Mammary epithelial cell (primary cell): ENCODE measurements at regions of chr6 and their contacts with region 1.

Region 1: DNA sequence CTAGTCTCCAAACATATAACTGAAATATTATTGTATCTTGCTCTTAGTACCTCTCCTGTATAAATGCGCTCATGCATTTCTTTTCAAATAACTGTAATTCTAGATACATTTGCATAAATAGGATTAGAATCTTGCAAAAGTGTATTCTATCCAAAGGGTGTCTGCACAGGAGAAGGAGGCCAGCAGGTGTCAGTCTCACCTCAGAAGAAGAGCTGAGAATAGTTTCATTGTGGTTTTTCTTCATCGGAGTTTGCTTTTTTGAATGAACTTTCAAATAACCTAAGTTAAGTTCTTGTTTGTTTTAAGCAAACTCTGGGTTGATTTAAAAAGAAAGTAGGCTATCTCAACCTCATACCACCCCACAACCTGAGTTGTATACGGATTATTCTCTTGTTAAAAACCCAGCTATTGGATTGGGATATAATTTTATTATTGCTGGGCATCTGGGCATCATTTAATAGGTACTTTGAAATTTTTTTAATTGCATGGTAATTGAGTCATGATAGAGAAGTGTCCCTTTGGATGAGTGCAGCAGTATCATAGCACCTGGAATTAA is 125.0 kb upstream of the MLIP start:
- DNase-seq: peak; percentile 39
- H3K4me3 ChIP-seq: no peak overlapping the region
- H3K27ac ChIP-seq: no peak overlapping the region
- H3K4me1 ChIP-seq: peaks cover 38% of the 10 kb centered on the region
- H3K27me3 ChIP-seq: no peaks in the 10 kb centered on the region
- CTCF ChIP-seq: peak; percentile 84 to 90

Region 2: DNA sequence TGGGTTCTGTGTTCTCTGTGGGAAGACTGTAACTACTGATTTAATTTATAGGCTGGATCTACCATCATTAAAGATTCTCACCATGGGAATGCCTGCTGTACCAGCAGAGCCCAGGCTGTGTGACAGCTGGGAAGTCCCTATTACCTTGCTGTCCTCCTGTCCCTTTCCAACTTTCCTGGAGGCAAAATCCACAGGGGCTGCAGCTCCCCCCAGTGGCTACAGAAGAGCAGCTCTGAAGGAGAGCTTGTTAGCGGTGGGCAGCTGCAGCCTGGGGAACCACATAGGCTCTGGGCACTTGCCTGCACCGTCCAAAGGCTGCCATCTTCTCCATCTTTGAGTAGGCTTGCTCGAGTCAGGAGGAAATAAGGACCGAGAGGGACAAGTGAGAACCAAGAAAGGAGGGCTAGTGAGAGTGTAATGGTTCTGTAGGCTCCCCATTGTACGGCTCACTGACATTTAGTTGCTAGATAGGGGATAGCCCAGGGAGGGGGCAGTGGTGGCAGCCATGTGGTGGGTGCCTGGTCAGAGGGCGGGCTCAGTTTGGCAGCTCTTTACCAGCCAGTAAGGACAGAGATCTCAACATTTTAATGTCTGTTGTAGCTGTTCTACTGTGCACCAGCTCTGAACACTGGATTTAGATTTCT is 30.1 kb before region 1 on chr6:
- CTCF ChIA-PET with region 1: no interaction called
- dilution Hi-C with region 1: no loop called
- in situ Hi-C with region 1: no loop called
- intact Hi-C with region 1: no loop called
- DNase-seq: peak; percentile 54
- H3K4me3 ChIP-seq: no peak overlapping the region
- H3K27ac ChIP-seq: no peak overlapping the region
- H3K4me1 ChIP-seq: no peaks in the 10 kb centered on the region
- H3K27me3 ChIP-seq: no peaks in the 10 kb centered on the region
- CTCF ChIP-seq: peak; percentile 54 to 82

Region 3: GRCh38 chr6:54173089-54173488 is 186.8 kb after region 1 on chr6:
- CTCF ChIA-PET with region 1: interaction called, 13 read pairs
- dilution Hi-C with region 1: no loop called
- in situ Hi-C with region 1: no loop called
- intact Hi-C with region 1: no loop called
- DNase-seq: no peak
- H3K4me3 ChIP-seq: no peak overlapping the region
- H3K27ac ChIP-seq: no peak overlapping the region
- H3K4me1 ChIP-seq: peaks cover 3% of the 10 kb centered on the region
- H3K27me3 ChIP-seq: peaks cover 2% of the 10 kb centered on the region
- CTCF ChIP-seq: no peak

Region 4: DNA sequence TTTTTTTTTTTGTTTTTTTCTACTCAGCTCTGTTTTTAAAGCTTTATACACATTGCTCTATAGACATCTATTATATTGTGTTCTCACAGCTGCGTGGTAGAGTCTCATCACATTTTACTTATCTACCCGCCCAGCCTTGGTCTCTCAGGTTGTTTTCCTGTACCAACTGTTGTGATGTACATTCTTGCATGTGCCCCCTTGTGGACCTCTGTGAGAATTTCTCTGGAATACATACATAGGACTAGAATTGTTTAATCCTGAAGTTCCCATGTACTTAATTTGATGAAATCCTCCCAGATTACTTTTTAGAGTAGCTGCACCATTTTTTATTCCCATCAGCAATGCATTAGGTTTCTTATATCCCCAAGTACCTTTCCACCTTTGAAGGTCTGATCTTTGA is 281.6 kb after region 1 on chr6:
- CTCF ChIA-PET with region 1: no interaction called
- dilution Hi-C with region 1: no loop called
- in situ Hi-C with region 1: loop called in 1 of 2 experiments (anchors 25 kb)
- intact Hi-C with region 1: loop called (anchors 2 kb)
- DNase-seq: peak; percentile 19
- H3K4me3 ChIP-seq: no peak overlapping the region
- H3K27ac ChIP-seq: no peak overlapping the region
- H3K4me1 ChIP-seq: no peaks in the 10 kb centered on the region
- H3K27me3 ChIP-seq: no peaks in the 10 kb centered on the region
- CTCF ChIP-seq: peak; percentile 58 to 63

Region 5: DNA sequence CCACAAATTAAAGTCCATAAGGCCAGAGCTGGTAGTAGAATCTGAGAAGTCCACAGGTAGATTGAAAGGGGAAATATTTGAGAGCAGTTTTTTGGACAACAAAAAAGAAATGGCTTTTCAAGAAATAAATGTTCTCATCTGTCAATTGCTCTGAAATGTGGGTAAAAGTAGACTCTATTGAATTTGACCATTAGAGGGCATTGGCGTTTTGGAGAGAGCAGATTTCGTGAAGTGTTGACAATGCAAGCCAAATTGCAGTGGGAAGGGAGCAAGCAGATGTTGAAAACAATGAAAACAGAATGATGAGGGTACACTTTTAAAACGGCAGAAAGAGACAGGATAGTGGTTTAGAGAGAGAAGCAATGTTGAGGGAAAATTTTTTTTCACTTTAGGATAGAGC is 711.2 kb after region 1 on chr6:
- CTCF ChIA-PET with region 1: no interaction called
- dilution Hi-C with region 1: no loop called
- in situ Hi-C with region 1: loop called in 1 of 2 experiments (anchors 25 kb)
- intact Hi-C with region 1: loop called (anchors 1 kb)
- DNase-seq: peak; percentile 37
- H3K4me3 ChIP-seq: no peak overlapping the region
- H3K27ac ChIP-seq: no peak overlapping the region
- H3K4me1 ChIP-seq: peaks cover 23% of the 10 kb centered on the region
- H3K27me3 ChIP-seq: no peaks in the 10 kb centered on the region
- CTCF ChIP-seq: peak; percentile 46 to 67

Region 6: DNA sequence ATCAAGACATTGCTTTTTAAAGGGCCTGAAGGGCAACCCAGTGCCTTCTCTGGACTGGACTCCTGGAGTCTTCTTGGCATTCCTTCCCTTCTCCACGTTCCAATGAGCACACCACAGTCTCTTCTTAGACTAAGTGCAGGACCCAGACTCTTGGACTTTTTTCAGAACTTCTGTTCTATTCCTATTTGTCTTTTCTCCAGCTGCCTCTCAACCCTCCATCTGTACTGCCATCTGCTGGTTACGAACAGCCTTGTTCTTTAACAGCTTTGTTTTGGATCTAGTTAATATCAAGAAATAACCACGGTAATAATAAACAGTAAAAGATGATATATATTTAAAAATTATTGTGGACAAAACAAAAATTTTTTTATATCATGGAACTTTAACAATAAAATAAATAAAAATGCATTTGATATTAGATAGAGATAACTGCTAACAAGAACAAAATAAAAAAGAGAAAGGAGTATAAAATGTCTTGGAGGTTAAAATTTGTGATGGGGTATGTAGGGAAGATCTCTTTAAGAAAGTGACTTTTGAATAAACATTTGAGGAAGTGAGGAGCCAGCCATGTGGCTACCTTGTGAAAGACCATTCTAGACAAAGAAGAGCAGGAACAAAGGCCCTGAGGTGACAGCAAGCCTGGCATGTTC is 1083.0 kb after region 1 on chr6:
- CTCF ChIA-PET with region 1: no interaction called
- dilution Hi-C with region 1: no loop called
- in situ Hi-C with region 1: loop called in 1 of 2 experiments (anchors 10 kb)
- intact Hi-C with region 1: loop called (anchors 5 kb)
- DNase-seq: peak; percentile 39
- H3K4me3 ChIP-seq: no peak overlapping the region
- H3K27ac ChIP-seq: no peak overlapping the region
- H3K4me1 ChIP-seq: no peaks in the 10 kb centered on the region
- H3K27me3 ChIP-seq: no peaks in the 10 kb centered on the region
- CTCF ChIP-seq: peak; percentile 76 to 80